Natural killer cell (primary cell): ENCODE measurements at regions of chr14 and their contacts with region 1.

Region 1: GRCh38 chr14:74493343-74494261 is at the start of gene ISCA2:
- DNase-seq: peak; percentile 98 to 99
- ATAC-seq: peak; percentile 88 to 97 (median 91)
- H3K4me3 ChIP-seq: peak within 1 kb of the TSS; percentile 92
- H3K4me3 Mint-ChIP-seq: no peak within 1 kb of the TSS
- H3K27ac ChIP-seq: peak within 1 kb of the TSS; percentile 65
- H3K27ac Mint-ChIP-seq: no peak within 1 kb of the TSS
- H3K4me1 ChIP-seq: peaks cover 18% of the 10 kb centered on the region
- H3K4me1 Mint-ChIP-seq: peaks cover 16 to 17% of the 10 kb centered on the region in 2 donors
- H3K27me3 ChIP-seq: no peaks in the 10 kb centered on the region
- H3K27me3 Mint-ChIP-seq: no peaks in the 10 kb centered on the region
- CTCF ChIP-seq: no peak
- total RNA-seq, gene ISCA2: 12.0 to 18.2 (median 15.3) TPM

Region 2: GRCh38 chr14:73685328-73685727 is 808.3 kb before region 1 on chr14:
- intact Hi-C with region 1: no loop called
- DNase-seq: no peak
- ATAC-seq: no peak
- H3K4me3 ChIP-seq: no peak overlapping the region
- H3K4me3 Mint-ChIP-seq: no peak overlapping the region
- H3K27ac ChIP-seq: no peak overlapping the region
- H3K27ac Mint-ChIP-seq: no peak overlapping the region
- H3K4me1 ChIP-seq: no peaks in the 10 kb centered on the region
- H3K4me1 Mint-ChIP-seq: no peaks in the 10 kb centered on the region
- H3K27me3 ChIP-seq: no peaks in the 10 kb centered on the region
- H3K27me3 Mint-ChIP-seq: no peaks in the 10 kb centered on the region
- CTCF ChIP-seq: no peak

Region 3: DNA sequence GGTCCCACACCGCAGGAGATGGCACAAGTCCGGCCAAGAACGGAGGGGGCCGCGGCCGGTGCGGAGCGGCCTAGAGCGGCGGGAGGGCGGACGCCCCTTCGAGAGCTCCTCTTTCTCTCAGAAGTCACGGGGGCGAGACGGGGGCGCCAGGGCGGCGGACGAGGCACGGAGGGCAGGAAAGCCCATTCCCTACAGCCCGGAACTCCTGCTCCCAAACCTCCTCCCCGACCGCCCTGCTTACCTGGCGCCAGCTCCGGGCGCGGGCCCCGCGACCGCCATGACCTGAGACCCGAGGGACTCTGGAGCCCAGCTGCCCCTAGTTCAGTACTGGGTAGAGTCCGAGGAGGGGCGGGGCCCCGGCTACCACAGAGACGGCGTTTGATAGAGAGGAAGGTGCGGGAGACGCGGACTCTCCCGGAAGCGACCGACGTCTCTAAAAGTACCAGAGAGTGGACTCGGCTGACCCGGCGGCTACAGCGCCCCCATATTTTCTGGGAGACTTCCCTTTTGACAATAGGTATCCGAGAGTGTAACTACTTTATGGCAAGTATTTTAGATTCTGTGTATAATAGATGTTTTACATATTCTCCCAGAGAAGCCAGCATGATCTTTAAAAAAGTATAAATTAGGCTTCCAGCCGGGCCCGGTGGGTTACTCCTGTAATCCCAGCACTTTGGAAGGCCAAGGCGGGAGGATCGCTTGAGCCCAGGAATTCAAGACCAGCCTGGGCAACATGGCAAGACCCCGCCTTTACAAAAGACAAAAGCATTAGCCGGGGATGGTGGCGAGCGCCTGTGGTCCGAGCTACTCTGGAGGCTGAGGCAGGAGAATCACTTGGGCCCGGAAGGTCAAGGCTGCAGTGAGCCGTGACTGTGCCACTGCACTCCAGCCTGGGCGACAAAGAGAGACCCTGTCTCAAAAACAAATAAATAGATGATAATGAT is 190.7 kb before region 1 on chr14 and contains the start of gene ABCD4:
- intact Hi-C with region 1: loop called (anchors 2 kb)
- DNase-seq: peak; percentile 81 to 87
- ATAC-seq: peak; percentile 90 to 97 (median 97)
- H3K4me3 ChIP-seq: peak within 1 kb of the TSS; percentile 65
- H3K4me3 Mint-ChIP-seq: peak within 1 kb of the TSS; percentile 99
- H3K27ac ChIP-seq: peak within 1 kb of the TSS; percentile 67
- H3K27ac Mint-ChIP-seq: peak within 1 kb of the TSS; percentile 94 to 96
- H3K4me1 ChIP-seq: peaks cover 19% of the 10 kb centered on the region
- H3K4me1 Mint-ChIP-seq: peaks cover 27 to 32% of the 10 kb centered on the region in 2 donors
- H3K27me3 ChIP-seq: no peaks in the 10 kb centered on the region
- H3K27me3 Mint-ChIP-seq: no peaks in the 10 kb centered on the region
- CTCF ChIP-seq: peak; percentile 34
- total RNA-seq, gene ABCD4: 78.3 to 99.6 (median 92.8) TPM

Region 4: DNA sequence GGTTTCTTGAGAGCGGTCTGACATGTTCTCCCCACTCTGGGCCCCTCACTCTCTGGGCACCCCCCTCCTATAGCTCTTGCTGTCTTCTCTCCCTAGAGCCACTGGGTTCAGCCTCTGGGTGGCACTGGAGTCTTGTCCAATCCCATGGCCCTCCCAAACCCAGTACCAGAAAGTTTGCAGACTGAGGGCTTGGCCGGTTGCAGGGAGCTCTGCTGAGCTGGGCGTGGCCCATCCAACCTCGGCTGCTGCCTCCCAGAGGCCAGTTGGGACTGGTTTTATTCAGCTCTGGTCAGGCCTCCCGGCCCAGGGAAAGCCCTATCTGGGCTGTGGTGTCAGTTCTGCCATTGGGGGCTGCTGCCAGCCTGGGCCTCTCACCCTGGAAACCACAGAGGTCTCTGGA is 37.9 kb after region 1 on chr14:
- intact Hi-C with region 1: no loop called
- DNase-seq: no peak
- ATAC-seq: no peak
- H3K4me3 ChIP-seq: no peak overlapping the region
- H3K4me3 Mint-ChIP-seq: no peak overlapping the region
- H3K27ac ChIP-seq: no peak overlapping the region
- H3K27ac Mint-ChIP-seq: no peak overlapping the region
- H3K4me1 ChIP-seq: no peaks in the 10 kb centered on the region
- H3K4me1 Mint-ChIP-seq: peaks cover 0 to under 1% of the 10 kb centered on the region in 2 donors
- H3K27me3 ChIP-seq: no peaks in the 10 kb centered on the region
- H3K27me3 Mint-ChIP-seq: peaks cover 0 to 3% of the 10 kb centered on the region in 2 donors
- CTCF ChIP-seq: no peak

Region 5: GRCh38 chr14:74618078-74618952 is 124.7 kb after region 1 on chr14:
- intact Hi-C with region 1: loop called (anchors 2 kb)
- DNase-seq: peak; percentile 86 to 92
- ATAC-seq: peak; percentile 74 to 91 (median 89)
- H3K4me3 ChIP-seq: no peak overlapping the region
- H3K4me3 Mint-ChIP-seq: peak overlapping the region; percentile 83
- H3K27ac ChIP-seq: peak overlapping the region; percentile 84
- H3K27ac Mint-ChIP-seq: peak overlapping the region; percentile 91 to 97
- H3K4me1 ChIP-seq: peaks cover 82% of the 10 kb centered on the region
- H3K4me1 Mint-ChIP-seq: peaks cover 82 to 92% of the 10 kb centered on the region in 2 donors
- H3K27me3 ChIP-seq: no peaks in the 10 kb centered on the region
- H3K27me3 Mint-ChIP-seq: peaks cover 0 to 2% of the 10 kb centered on the region in 2 donors
- CTCF ChIP-seq: no peak

Region 6: GRCh38 chr14:74638066-74638465 is 144.5 kb after region 1 on chr14:
- intact Hi-C with region 1: no loop called
- DNase-seq: peak in 1 of 2 donors; percentile 33
- ATAC-seq: peak in 2 of 3 donors; percentile 71 to 73
- H3K4me3 ChIP-seq: no peak overlapping the region
- H3K4me3 Mint-ChIP-seq: no peak overlapping the region
- H3K27ac ChIP-seq: no peak overlapping the region
- H3K27ac Mint-ChIP-seq: peak overlapping the region in 1 of 2 donors; percentile 73
- H3K4me1 ChIP-seq: no peaks in the 10 kb centered on the region
- H3K4me1 Mint-ChIP-seq: peaks cover 0 to 25% of the 10 kb centered on the region in 2 donors
- H3K27me3 ChIP-seq: no peaks in the 10 kb centered on the region
- H3K27me3 Mint-ChIP-seq: peaks cover 0 to 9% of the 10 kb centered on the region in 2 donors
- CTCF ChIP-seq: no peak

Region 7: GRCh38 chr14:74762917-74763802 is 269.6 kb after region 1 on chr14 and contains the start of gene YLPM1:
- intact Hi-C with region 1: loop called (anchors 10 kb)
- DNase-seq: peak; percentile 87 to 98
- ATAC-seq: peak; percentile 94 to 99 (median 95)
- H3K4me3 ChIP-seq: peak within 1 kb of the TSS; percentile 96
- H3K4me3 Mint-ChIP-seq: peak within 1 kb of the TSS; percentile 92
- H3K27ac ChIP-seq: peak within 1 kb of the TSS; percentile 93
- H3K27ac Mint-ChIP-seq: peak within 1 kb of the TSS; percentile 91 to 94
- H3K4me1 ChIP-seq: peaks cover 13% of the 10 kb centered on the region
- H3K4me1 Mint-ChIP-seq: peaks cover 45 to 46% of the 10 kb centered on the region in 2 donors
- H3K27me3 ChIP-seq: no peaks in the 10 kb centered on the region
- H3K27me3 Mint-ChIP-seq: peaks cover 0 to 2% of the 10 kb centered on the region in 2 donors
- CTCF ChIP-seq: peak; percentile 57
- total RNA-seq, gene YLPM1: 86.1 to 101 (median 93.3) TPM